Activated B cell treated with CpG ODN at 0.5 μM for 24 hours (primary cell): ENCODE measurements at regions of chr12 and their contacts with region 1.

Region 1: DNA sequence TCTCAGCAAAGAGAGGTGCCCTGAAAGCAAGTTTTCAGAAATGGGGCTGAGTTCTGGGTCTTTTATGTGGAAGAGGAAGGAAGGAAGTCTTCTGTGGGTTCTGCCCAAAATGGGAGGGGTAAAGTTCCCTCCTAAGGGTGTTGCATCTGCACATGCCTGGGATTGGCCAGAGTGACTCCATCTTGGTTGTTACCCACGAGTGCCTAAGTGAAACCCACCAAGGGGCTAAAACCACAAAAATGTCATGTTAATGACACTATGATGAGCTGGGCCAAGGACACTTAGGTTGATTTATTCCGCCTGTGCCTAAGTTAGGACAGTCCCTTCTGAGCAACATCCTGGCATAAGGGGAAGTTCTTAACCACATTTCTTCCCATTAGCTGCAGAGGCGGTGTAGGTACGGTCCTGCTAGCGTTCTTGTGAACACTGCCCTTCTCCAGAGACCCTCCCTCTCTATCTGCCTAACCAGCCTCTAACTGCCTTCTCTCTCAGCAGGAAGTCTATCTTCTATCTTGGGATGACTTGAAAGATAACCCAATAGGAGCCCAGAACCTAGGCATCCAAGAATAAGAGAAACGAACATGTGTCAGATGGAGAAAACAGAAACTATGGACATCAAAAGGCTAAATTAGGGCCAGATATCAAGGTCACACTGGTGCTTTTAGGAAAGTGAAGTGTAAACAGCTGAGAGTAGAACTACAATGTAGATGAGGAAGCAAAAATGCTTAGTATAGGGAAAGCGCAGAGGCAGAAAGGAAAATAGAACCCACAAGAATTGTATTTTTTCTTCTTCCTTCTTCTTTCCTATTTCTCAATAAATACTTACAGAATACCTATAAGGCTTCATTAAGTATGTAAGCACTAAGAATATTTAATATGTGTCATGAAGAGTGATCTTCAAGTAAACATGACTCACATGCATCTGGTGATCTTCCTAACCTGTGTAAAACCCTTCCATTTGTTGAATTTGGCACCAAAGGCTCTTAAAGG is 104.2 kb upstream of the AMN1 start:
- DNase-seq: peak; percentile 36
- ATAC-seq: peak; percentile 84
- H3K4me3 Mint-ChIP-seq: peak overlapping the region; percentile 59
- H3K27ac Mint-ChIP-seq: peak overlapping the region; percentile 94
- H3K4me1 Mint-ChIP-seq: peaks cover 76% of the 10 kb centered on the region
- H3K27me3 Mint-ChIP-seq: no peaks in the 10 kb centered on the region
- CTCF ChIP-seq: no peak

Region 2: GRCh38 chr12:30384976-30385375 is 1448.1 kb before region 1 on chr12:
- CTCF ChIA-PET with region 1: no interaction called
- POLR2A ChIA-PET with region 1: no interaction called
- intact Hi-C with region 1: no loop called
- DNase-seq: no peak
- ATAC-seq: no peak
- H3K4me3 Mint-ChIP-seq: no peak overlapping the region
- H3K27ac Mint-ChIP-seq: no peak overlapping the region
- H3K4me1 Mint-ChIP-seq: no peaks in the 10 kb centered on the region
- H3K27me3 Mint-ChIP-seq: no peaks in the 10 kb centered on the region
- CTCF ChIP-seq: no peak

Region 3: DNA sequence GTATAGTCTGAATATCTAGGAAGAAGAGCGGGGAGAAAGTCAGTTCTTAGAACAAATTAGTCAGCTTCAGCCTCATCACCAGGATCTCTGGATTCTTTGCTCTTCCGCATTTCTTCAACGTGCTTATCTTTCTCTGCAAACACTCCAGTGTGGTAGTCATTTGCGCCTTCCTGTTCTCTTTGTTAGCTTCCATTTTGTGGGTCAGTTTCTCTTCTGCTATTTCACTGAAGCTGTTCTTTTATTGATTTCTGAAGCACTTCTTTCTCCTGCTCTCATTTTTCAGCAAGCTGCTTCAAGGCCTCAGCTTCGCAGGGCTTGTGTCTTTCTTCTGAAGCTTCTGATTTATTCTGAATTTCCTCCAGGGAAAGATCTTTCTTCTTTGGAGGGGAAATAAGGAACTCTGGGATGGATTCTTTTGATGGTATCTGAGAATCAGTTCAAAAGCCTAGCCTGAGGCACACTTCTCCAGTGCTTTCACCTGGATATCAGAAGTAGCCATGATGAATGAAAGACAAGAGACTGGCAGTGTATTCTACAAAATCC is 117.7 kb before region 1 on chr12:
- CTCF ChIA-PET with region 1: no interaction called
- POLR2A ChIA-PET with region 1: interaction called, 11 read pairs
- intact Hi-C with region 1: no loop called
- DNase-seq: no peak
- ATAC-seq: peak; percentile 93
- H3K4me3 Mint-ChIP-seq: peak overlapping the region; percentile 32
- H3K27ac Mint-ChIP-seq: peak overlapping the region; percentile 85
- H3K4me1 Mint-ChIP-seq: peaks cover 58% of the 10 kb centered on the region
- H3K27me3 Mint-ChIP-seq: no peaks in the 10 kb centered on the region
- CTCF ChIP-seq: no peak

Region 4: DNA sequence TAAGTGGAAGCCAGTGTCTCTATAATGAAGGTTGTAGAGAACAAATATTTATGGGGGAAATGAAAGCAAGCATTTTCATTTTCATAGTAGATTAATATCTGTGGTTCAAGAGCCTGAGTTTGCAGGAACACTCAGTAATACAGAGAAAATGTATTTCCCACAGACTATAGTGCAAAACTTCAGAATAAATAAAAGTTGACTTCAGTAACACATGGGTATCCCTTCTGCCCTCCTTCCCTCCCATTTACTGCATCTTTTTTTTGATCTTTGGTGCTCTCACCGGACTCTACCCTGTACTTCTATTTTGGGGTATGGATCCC is 28.9 kb before region 1 on chr12:
- CTCF ChIA-PET with region 1: no interaction called
- POLR2A ChIA-PET with region 1: interaction called, 68 read pairs
- intact Hi-C with region 1: no loop called
- DNase-seq: no peak
- ATAC-seq: no peak
- H3K4me3 Mint-ChIP-seq: peak overlapping the region; percentile 78
- H3K27ac Mint-ChIP-seq: peak overlapping the region; percentile 88
- H3K4me1 Mint-ChIP-seq: peaks cover 50% of the 10 kb centered on the region
- H3K27me3 Mint-ChIP-seq: no peaks in the 10 kb centered on the region
- CTCF ChIP-seq: no peak

Region 5: DNA sequence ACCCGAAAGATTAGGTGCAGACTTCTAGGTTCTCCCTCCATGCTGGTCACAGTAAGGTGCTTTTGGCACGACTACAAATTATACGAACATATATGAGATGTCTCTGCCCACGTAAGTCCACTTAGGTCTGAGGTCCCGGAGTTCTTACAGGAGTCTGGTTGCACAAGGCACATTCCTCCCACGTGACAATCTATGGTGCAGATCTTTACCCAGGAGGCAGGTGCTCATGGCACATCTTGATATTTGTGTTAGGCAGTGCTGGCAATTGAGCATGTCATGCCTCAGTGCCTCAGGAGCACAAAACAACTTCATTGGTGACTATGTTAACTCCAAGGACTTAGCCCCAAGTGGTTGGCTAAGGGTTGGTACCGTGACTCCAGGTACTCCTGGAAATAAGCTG is 12.2 kb before region 1 on chr12:
- CTCF ChIA-PET with region 1: no interaction called
- POLR2A ChIA-PET with region 1: interaction called, 5 read pairs
- intact Hi-C with region 1: loop called (anchors 1 kb)
- DNase-seq: no peak
- ATAC-seq: no peak
- H3K4me3 Mint-ChIP-seq: no peak overlapping the region
- H3K27ac Mint-ChIP-seq: no peak overlapping the region
- H3K4me1 Mint-ChIP-seq: peaks cover 22% of the 10 kb centered on the region
- H3K27me3 Mint-ChIP-seq: no peaks in the 10 kb centered on the region
- CTCF ChIP-seq: no peak

Region 6: GRCh38 chr12:31859232-31859977 is 26.4 kb after region 1 on chr12:
- CTCF ChIA-PET with region 1: no interaction called
- POLR2A ChIA-PET with region 1: interaction called, 3 read pairs
- intact Hi-C with region 1: loop called (anchors 1 kb)
- DNase-seq: peak; percentile 35
- ATAC-seq: peak; percentile 93
- H3K4me3 Mint-ChIP-seq: peak overlapping the region; percentile 61
- H3K27ac Mint-ChIP-seq: peak overlapping the region; percentile 87
- H3K4me1 Mint-ChIP-seq: peaks cover 31% of the 10 kb centered on the region
- H3K27me3 Mint-ChIP-seq: no peaks in the 10 kb centered on the region
- CTCF ChIP-seq: no peak

Region 7: GRCh38 chr12:31890295-31891285 is 57.6 kb after region 1 on chr12:
- CTCF ChIA-PET with region 1: no interaction called
- POLR2A ChIA-PET with region 1: interaction called, 56 read pairs
- intact Hi-C with region 1: no loop called
- DNase-seq: no peak
- ATAC-seq: peak; percentile 43
- H3K4me3 Mint-ChIP-seq: peak overlapping the region; percentile 45
- H3K27ac Mint-ChIP-seq: peak overlapping the region; percentile 82
- H3K4me1 Mint-ChIP-seq: peaks cover 71% of the 10 kb centered on the region
- H3K27me3 Mint-ChIP-seq: no peaks in the 10 kb centered on the region
- CTCF ChIP-seq: no peak